OCI-LY7 (cell line): ENCODE measurements at regions of chr6 and their contacts with region 1.

Region 1: DNA sequence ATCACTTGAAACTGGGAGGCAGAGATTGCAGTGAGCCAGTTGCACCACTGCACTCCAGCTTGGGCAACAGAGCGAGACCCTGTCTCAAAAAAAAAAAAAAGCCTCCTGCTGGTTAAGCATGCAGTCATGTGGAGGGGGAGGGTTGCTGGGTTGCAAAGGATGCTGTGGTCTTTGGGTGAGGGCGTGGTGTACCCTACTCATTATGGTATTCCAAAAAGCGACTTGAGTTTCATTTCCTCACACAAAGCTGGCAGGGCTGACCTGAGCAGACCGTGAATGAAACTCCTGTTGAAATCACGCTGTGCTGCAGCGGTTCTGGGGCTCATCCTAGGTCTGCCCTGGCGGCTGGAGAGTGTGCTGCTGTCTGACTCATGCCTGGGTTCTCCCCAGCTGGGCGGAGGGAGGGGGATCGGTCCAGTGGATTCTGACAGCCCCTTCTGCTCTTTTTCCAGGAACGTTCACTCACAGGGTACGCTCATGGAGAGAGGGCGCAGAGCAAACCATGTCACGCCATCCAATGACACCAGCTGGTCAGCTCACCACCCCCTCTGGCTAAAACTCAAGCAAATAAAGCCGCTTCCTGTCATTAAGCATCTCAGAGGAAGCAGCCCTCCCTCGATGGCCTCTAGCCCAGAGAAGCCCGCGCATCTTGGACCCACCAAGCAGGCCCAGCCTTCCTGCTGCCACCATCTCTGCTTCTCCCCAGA is 166.2 kb downstream of the SCML4 start:
- DNase-seq: peak; percentile 99
- H3K4me3 ChIP-seq: peak overlapping the region; percentile 74
- H3K27ac ChIP-seq: peak overlapping the region; percentile 98
- H3K4me1 ChIP-seq: peaks cover 70% of the 10 kb centered on the region
- CTCF ChIP-seq: no peak

Region 2: DNA sequence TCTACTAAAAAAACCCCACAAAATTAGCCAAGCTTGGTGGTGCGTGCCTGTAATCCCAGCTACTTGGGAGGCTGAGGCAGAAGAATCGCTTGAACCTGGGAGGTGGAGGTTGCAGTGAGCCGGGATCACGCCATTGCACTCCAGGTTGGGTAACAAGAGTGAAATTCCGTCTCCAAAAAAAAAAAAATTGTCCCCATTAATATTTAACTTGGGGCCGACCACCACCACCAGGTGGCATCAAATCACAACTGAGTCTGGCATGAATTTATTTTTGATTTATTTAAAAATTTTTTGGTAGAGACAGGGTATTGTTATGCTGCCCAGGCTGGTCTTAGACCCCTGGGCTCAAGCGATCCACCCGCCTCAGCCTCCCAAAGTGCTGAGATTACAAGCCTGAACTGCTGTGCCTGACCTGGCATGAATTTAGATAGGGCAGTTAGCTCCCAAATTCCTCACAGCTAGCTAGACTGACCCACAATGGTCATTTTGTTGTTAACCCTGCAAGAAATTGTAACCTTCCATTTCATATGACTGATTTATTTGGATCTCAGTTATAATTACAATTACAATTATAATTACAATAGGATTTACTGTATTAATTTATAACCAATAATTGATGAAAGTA is 525.5 kb before region 1 on chr6:
- CTCF ChIA-PET with region 1: interaction called, 3 read pairs
- POLR2A ChIA-PET with region 1: interaction called, 5 read pairs
- intact Hi-C with region 1: loop called (anchors 5 kb)
- DNase-seq: peak; percentile 71
- H3K4me3 ChIP-seq: no peak overlapping the region
- H3K27ac ChIP-seq: no peak overlapping the region
- H3K4me1 ChIP-seq: peaks cover 13% of the 10 kb centered on the region
- CTCF ChIP-seq: peak; percentile 86

Region 3: GRCh38 chr6:107369493-107369892 is 288.4 kb before region 1 on chr6:
- CTCF ChIA-PET with region 1: no interaction called
- POLR2A ChIA-PET with region 1: no interaction called
- intact Hi-C with region 1: no loop called
- DNase-seq: no peak
- H3K4me3 ChIP-seq: no peak overlapping the region
- H3K27ac ChIP-seq: no peak overlapping the region
- H3K4me1 ChIP-seq: no peaks in the 10 kb centered on the region
- CTCF ChIP-seq: no peak

Region 4: GRCh38 chr6:107459283-107460082 is 198.4 kb before region 1 on chr6 and contains the start of gene PDSS2:
- CTCF ChIA-PET with region 1: interaction called, 3 read pairs
- POLR2A ChIA-PET with region 1: interaction called, 32 read pairs
- intact Hi-C with region 1: loop called (anchors 1 kb)
- DNase-seq: peak; percentile 99
- H3K4me3 ChIP-seq: peak within 1 kb of the TSS; percentile 86
- H3K27ac ChIP-seq: peak within 1 kb of the TSS; percentile 90
- H3K4me1 ChIP-seq: peaks cover 19% of the 10 kb centered on the region
- CTCF ChIP-seq: peak; percentile 77
- total RNA-seq, gene PDSS2: 7.4 and 14.7 TPM in 2 replicates

Region 5: GRCh38 chr6:107550241-107550840 is 107.6 kb before region 1 on chr6:
- CTCF ChIA-PET with region 1: interaction called, 4 read pairs
- POLR2A ChIA-PET with region 1: interaction called, 4 read pairs
- intact Hi-C with region 1: loop called (anchors 5 kb)
- DNase-seq: peak; percentile 87
- H3K4me3 ChIP-seq: peak overlapping the region; percentile 49
- H3K27ac ChIP-seq: peak overlapping the region; percentile 91
- H3K4me1 ChIP-seq: peaks cover 35% of the 10 kb centered on the region
- CTCF ChIP-seq: no peak

Region 6: GRCh38 chr6:107589199-107589598 is 68.7 kb before region 1 on chr6:
- CTCF ChIA-PET with region 1: no interaction called
- POLR2A ChIA-PET with region 1: no interaction called
- intact Hi-C with region 1: no loop called
- DNase-seq: no peak
- H3K4me3 ChIP-seq: no peak overlapping the region
- H3K27ac ChIP-seq: no peak overlapping the region
- H3K4me1 ChIP-seq: peaks cover 24% of the 10 kb centered on the region
- CTCF ChIP-seq: no peak

Region 7: GRCh38 chr6:107645800-107646575 is 11.9 kb before region 1 on chr6:
- CTCF ChIA-PET with region 1: interaction called, 6 read pairs
- POLR2A ChIA-PET with region 1: interaction called, 89 read pairs
- intact Hi-C with region 1: no loop called
- DNase-seq: no peak
- H3K4me3 ChIP-seq: no peak overlapping the region
- H3K27ac ChIP-seq: no peak overlapping the region
- H3K4me1 ChIP-seq: peaks cover 77% of the 10 kb centered on the region
- CTCF ChIP-seq: no peak

Region 8: DNA sequence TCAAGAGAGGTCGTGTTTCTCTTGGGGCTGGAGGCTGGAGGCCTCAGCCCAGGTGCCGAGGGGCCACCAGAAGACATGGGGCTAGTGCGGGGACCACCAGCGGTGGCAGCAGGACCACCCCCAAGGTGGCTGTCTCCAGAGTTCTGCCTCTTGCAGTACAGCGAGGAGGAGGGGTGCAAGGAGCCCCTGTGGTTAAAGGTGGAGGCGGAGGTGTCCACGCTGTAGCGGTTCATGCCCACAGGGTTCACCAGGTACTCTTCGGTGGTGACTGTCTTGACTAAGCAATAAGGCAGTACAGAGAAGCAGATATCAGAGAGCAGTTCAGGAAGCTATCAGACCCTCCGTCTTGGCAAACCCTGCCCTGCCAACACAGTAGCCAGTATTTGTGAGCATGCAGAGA is 62.8 kb after region 1 on chr6:
- CTCF ChIA-PET with region 1: no interaction called
- POLR2A ChIA-PET with region 1: no interaction called
- intact Hi-C with region 1: no loop called
- DNase-seq: no peak
- H3K4me3 ChIP-seq: no peak overlapping the region
- H3K27ac ChIP-seq: no peak overlapping the region
- H3K4me1 ChIP-seq: peaks cover 12% of the 10 kb centered on the region
- CTCF ChIP-seq: no peak